PC-9 (cell line): ENCODE measurements at regions of chr12 and their contacts with region 1.

Region 1: GRCh38 chr12:15979096-15980092 is 68.3 kb downstream of the DERA start:
- DNase-seq: peak; percentile 15 to 50
- H3K4me3 ChIP-seq: no peak overlapping the region
- H3K27ac ChIP-seq: peak overlapping the region; percentile 84
- H3K4me1 ChIP-seq: peaks cover 36% of the 10 kb centered on the region
- H3K27me3 ChIP-seq: no peaks in the 10 kb centered on the region
- CTCF ChIP-seq: peak; percentile 66

Region 2: DNA sequence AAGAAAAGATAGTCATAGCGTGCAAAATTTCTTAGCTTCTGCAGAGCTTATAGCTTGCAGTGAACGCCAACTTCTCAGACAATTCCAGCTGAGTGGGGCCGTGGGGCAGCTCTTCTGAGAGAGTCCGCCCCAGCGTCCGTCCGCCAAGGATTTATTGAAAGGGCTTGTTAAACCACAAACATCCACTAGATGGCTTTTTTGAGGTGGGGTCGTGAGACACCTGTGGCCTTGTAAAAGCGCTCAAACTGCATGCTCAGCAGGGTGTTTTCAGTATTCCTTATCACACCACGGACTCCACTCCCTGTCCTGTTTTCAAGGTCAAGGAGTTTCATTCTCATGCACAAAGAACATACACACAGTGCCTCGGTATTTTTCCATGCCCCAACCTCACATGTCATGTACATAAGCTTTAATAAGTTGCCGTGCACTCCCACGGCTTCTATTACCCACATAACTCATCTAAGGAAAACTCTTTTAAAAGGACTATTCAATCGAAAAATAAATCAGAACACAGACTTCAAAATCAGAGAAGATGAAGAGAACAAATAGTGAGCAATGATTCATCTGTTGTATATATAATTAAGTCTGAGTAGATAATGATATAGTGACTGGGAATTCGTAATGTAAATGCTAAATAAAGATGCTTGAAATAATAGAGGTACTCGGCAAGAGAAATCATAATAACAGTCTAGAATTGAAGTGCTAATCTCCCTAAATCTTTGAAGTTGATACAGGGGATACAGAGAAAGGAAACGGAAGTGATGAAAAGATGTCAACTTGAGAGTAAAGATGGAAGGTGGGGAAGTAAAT is 1222.9 kb before region 1 on chr12:
- CTCF ChIA-PET with region 1: no interaction called
- POLR2A ChIA-PET with region 1: interaction called, 13 read pairs
- intact Hi-C with region 1: no loop called
- DNase-seq: no peak
- H3K4me3 ChIP-seq: no peak overlapping the region
- H3K27ac ChIP-seq: no peak overlapping the region
- H3K4me1 ChIP-seq: no peaks in the 10 kb centered on the region
- H3K27me3 ChIP-seq: no peaks in the 10 kb centered on the region
- CTCF ChIP-seq: 0 out of 2 replicates have a peak, but pooled peaks have one; percentile 17

Region 3: GRCh38 chr12:15899282-15899870 is 80.0 kb before region 1 on chr12:
- CTCF ChIA-PET with region 1: interaction called, 3 read pairs
- POLR2A ChIA-PET with region 1: no interaction called
- intact Hi-C with region 1: loop called (anchors 2 kb)
- DNase-seq: peak in 1 of 2 experiments; percentile 38
- H3K4me3 ChIP-seq: no peak overlapping the region
- H3K27ac ChIP-seq: no peak overlapping the region; the same call in 1 of the 2 replicates
- H3K4me1 ChIP-seq: no peaks in the 10 kb centered on the region
- H3K27me3 ChIP-seq: no peaks in the 10 kb centered on the region
- CTCF ChIP-seq: peak; percentile 86

Region 4: GRCh38 chr12:15910864-15911721 is 68.3 kb before region 1 on chr12 and contains the start of gene DERA:
- CTCF ChIA-PET with region 1: no interaction called
- POLR2A ChIA-PET with region 1: interaction called, 7 read pairs
- intact Hi-C with region 1: loop called (anchors 2 kb)
- DNase-seq: peak; percentile 64 to 92
- H3K4me3 ChIP-seq: peak within 1 kb of the TSS; percentile 80
- H3K27ac ChIP-seq: peak within 1 kb of the TSS; percentile 82
- H3K4me1 ChIP-seq: peaks cover 17% of the 10 kb centered on the region
- H3K27me3 ChIP-seq: no peaks in the 10 kb centered on the region
- CTCF ChIP-seq: 0 out of 2 replicates have a peak, but pooled peaks have one; percentile 19
- total RNA-seq, gene DERA: 67.3 and 67.6 TPM in 2 replicates

Region 5: DNA sequence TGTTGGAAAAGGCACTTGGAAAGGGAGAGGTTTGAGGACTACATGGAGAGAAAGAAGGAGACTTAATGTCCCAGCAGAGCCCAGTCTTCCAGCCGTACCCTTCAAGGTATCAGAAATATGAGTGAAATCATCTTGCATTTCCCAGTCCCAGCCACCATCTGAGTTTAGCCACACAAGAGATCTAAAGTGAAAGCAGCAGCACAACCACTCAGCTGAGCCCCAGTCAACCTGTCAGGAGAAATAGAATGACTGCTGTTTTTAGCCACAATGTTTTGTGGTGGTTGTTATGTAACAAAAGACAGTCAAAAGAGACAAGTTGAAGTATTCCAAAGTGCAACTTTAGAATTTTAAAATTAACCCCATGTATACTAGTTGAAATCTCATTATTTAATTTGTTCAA is 40.3 kb before region 1 on chr12:
- CTCF ChIA-PET with region 1: no interaction called
- POLR2A ChIA-PET with region 1: no interaction called
- intact Hi-C with region 1: no loop called
- DNase-seq: no peak
- H3K4me3 ChIP-seq: no peak overlapping the region
- H3K27ac ChIP-seq: no peak overlapping the region
- H3K4me1 ChIP-seq: no peaks in the 10 kb centered on the region
- H3K27me3 ChIP-seq: no peaks in the 10 kb centered on the region
- CTCF ChIP-seq: no peak

Region 6: GRCh38 chr12:15956413-15957185 is 22.8 kb before region 1 on chr12:
- CTCF ChIA-PET with region 1: no interaction called
- POLR2A ChIA-PET with region 1: no interaction called
- intact Hi-C with region 1: loop called (anchors 2 kb)
- DNase-seq: peak; percentile 66 to 98
- H3K4me3 ChIP-seq: peak overlapping the region; percentile 22; the same call in 1 of the 2 replicates
- H3K27ac ChIP-seq: peak overlapping the region; percentile 93
- H3K4me1 ChIP-seq: peaks cover 33% of the 10 kb centered on the region
- H3K27me3 ChIP-seq: no peaks in the 10 kb centered on the region
- CTCF ChIP-seq: no peak